AG04449 (cell line): ENCODE measurements at regions of chr3 and their contacts with region 1.

Region 1: DNA sequence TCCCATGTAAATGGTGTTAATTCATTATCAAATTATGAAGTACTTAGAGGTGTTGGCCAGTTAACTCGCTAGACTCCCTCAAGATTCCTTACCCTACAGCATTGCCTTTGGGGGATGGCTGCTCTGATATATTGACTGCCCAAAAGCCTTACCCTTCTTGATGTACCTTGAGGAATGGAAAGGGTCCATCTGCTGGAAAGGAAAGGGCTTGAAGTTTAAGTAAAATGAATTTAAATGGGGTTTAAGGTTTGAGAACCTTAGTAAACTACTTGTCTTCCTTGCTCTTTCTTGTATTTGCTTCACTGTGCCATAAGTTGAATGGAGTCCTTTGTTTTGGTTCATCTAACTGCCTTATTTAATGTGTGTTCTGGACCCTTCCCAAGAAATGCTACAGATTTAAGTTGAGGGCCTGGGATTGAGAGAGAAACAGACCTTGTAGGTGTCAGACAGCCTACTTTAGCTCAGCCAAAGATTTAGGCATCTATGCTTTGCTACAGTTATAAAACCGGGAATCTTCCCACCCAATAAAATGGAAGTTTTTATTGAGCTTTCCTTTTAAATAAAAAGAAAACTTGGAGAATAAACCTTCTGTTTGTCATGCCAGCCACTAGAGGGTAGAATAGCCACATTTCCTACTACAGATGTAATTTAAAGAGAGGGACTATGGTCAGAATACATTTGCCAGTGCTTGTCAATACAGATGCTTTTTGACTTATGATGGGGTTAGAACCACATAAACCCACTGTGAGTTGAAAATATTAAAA is 25.3 kb downstream of the CMSS1 start:
- DNase-seq: no peak
- H3K4me3 ChIP-seq: no peak overlapping the region
- CTCF ChIP-seq: peak; percentile 51

Region 2: GRCh38 chr3:99499235-99500158 is 343.5 kb before region 1 on chr3:
- CTCF ChIA-PET with region 1: no interaction called
- POLR2A ChIA-PET with region 1: no interaction called
- DNase-seq: no peak
- H3K4me3 ChIP-seq: no peak overlapping the region
- CTCF ChIP-seq: peak; percentile 74

Region 3: DNA sequence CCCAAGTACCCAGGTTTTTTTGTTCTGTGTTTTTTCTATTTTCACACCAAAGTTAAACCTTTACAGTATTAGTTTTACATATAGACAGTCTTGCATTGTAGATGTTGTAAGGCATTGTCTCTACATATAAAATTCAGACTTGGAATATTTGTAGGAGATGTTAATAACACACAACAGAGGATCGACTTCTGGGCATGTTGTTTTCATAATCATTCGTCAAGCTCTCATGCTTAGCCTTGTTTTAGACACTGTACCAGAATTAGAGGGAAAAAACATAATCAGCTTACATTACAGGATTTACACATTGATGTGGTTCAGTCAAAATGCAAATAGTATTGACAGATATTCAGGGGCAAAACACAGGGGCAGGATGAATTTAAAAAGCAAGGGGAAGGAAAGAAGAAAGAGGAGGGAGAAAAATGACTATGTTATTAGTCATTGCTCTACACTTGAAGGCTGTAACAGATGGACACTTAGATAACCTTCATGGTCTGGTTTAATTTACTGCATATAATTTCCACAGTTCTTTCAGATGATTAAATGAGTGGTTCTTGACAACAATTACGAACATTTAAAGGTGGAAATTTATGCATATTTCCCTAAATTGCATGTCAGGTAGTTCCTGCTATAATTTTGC is 17.9 kb before region 1 on chr3:
- CTCF ChIA-PET with region 1: interaction called, 14 read pairs
- POLR2A ChIA-PET with region 1: no interaction called
- DNase-seq: no peak
- H3K4me3 ChIP-seq: no peak overlapping the region
- CTCF ChIP-seq: no peak

Region 4: DNA sequence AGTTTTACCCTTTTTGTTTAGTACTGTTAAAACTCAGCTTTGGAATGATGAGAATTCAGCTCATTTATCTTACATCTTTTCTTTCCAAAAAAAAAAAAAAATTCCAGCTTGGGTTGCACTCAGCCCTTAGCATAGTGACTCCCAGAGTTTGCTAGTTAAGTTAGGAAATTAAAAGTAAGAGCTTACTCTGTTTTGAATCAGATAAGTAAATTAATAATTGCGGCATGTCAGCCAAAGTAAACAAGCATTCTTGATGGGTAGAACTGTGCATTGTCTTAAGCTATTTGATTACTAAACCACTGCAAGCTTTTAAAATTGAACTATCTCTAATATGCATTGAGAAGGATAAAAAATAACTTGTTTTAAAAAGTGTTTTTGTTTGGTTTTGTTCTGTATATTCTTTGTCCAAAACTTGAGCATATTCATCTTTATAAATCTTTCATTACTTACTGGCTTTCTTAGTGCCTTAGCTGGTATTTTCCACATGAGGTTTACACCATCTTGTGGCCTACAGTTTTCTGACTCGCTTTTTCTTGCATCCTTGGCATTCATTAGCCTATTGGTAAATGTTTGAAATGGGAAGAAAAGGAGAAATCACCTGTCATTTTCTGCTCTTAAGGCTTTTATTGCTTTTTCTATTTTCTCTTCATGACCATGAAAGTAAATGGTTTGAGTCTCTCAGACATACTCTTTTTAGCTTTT is 163.7 kb after region 1 on chr3:
- CTCF ChIA-PET with region 1: interaction called, 24 read pairs
- POLR2A ChIA-PET with region 1: no interaction called
- DNase-seq: peak; percentile 10
- H3K4me3 ChIP-seq: no peak overlapping the region
- CTCF ChIP-seq: peak; percentile 10

Region 5: DNA sequence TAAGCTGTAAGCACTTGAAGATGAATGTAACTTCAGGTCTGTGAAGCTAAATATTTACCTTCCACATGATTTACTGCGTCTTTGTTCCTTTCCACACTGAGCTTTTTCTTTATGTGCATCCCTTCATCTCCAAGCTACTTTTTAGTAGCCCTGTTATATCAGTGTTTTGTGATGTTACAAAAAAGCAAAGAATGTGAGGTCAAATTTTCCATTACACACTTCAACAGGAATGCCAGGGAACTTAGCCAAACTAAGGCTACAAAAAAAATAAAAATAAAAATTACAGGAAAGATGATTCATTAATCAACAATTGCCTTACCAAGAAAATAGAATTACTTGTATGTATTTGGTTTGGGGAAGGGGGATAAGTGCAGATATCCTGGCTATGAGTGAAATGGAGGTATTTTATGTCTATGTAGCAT is 198.3 kb after region 1 on chr3:
- CTCF ChIA-PET with region 1: interaction called, 13 read pairs
- POLR2A ChIA-PET with region 1: interaction called, 3 read pairs
- DNase-seq: peak; percentile 67
- H3K4me3 ChIP-seq: no peak overlapping the region
- CTCF ChIP-seq: no peak

Region 6: GRCh38 chr3:100089812-100090668 is 247.0 kb after region 1 on chr3:
- CTCF ChIA-PET with region 1: interaction called, 18 read pairs
- POLR2A ChIA-PET with region 1: interaction called, 6 read pairs
- DNase-seq: no peak
- H3K4me3 ChIP-seq: no peak overlapping the region
- CTCF ChIP-seq: peak; percentile 67